ENCODE measurements at regions of chr1 and their contacts with region 1.

Region 1: DNA sequence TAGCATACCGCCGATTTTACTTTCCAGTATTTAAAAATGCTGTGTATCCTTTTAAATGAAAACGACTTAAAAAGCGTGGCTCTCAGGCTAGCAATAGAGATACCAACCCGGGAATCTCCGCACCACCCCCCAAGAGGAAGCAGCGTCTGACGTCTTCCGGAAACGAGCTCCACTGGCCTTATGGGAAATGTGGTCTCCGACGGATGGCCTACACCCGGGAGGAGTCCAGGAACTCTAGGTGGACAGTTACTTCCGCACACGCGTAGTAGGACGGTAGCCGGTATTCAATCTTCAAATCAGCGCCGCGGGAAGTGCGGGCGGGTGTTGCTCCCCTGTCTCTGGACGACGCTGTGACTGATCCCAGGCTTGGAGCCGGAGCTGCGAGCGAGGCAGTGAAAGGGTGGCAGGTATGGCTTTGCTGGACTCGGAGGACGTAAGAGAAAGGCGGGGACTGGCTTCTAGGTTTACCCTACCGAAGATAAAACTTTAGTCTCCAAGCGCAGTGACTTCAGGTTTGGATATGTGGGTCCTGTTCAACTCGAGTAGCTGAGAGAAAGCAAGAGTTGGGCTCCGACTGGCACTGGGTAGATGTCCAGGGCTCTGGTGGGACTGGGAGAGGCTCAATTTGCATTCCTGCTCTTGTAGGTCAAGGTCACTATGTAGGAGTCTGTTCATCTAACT is at the start of gene ZNF684:
- DNase-seq: peak; percentile 95
- ATAC-seq: peak; percentile 99
- H3K4me3 ChIP-seq: peak within 1 kb of the TSS; percentile 73
- H3K27ac ChIP-seq: peak within 1 kb of the TSS; percentile 54
- H3K4me1 ChIP-seq: no peaks in the 10 kb centered on the region
- H3K27me3 ChIP-seq: no peaks in the 10 kb centered on the region
- CTCF ChIP-seq: no peak
- POLR2A ChIP-seq: peak; percentile 58; the same call in 1 of the 2 replicates
- RAD21 ChIP-seq: no peak
- total RNA-seq, gene ZNF684: 4.1 and 5.0 TPM in 2 replicates

Region 2: GRCh38 chr1:40553017-40553416 is 21.5 kb after region 1 on chr1:
- CTCF ChIA-PET with region 1: interaction called, 10 read pairs
- POLR2A ChIA-PET with region 1: no interaction called
- dilution Hi-C with region 1: no loop called
- in situ Hi-C with region 1: no loop called
- intact Hi-C with region 1: no loop called
- DNase-seq: no peak
- ATAC-seq: no peak
- H3K4me3 ChIP-seq: no peak overlapping the region
- H3K27ac ChIP-seq: no peak overlapping the region
- H3K4me1 ChIP-seq: no peaks in the 10 kb centered on the region
- H3K27me3 ChIP-seq: no peaks in the 10 kb centered on the region
- CTCF ChIP-seq: no peak
- POLR2A ChIP-seq: no peak
- RAD21 ChIP-seq: no peak

Measured in IMR-90 (cell line).